Lower leg skin (tissue), 4 donors: ENCODE measurements at regions of chr4 and their contacts with region 1.

Region 1: GRCh38 chr4:1899149-1900086 is 28.2 kb downstream of the NSD2 start:
- DNase-seq: peak; percentile 59 to 91
- H3K4me3 ChIP-seq: no peak overlapping the region
- CTCF ChIP-seq: peak in 1 of 3 donors; percentile 41
- POLR2A ChIP-seq: no peak

Region 2: DNA sequence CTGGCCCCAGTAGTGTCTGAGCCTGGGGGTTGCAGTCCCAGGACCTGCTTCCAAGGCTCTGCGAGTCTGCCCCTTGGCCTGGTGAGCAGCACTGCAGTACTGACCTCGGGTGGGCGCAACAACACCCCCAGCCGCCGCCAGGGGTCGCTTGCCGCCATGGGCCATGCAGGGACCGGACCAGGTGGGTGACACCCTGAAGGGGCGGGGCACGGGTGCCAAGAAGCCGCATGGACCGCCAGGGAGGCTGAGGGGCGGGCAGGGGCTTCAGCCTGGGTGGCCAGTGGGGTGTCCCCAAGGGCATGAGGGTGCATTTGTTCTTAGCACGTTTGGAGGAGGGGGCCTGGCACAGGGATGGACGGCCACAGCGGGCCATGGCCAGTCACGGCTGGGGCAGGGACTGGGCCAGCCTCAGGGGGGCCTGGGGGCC is 153.1 kb before region 1 on chr4:
- intact Hi-C with region 1: loop called (anchors 5 kb)
- DNase-seq: peak in 1 of 2 donors; percentile 93
- H3K4me3 ChIP-seq: no peak overlapping the region
- CTCF ChIP-seq: peak in 1 of 3 donors; percentile 12
- POLR2A ChIP-seq: no peak

Region 3: GRCh38 chr4:1809754-1810511 is 89.5 kb before region 1 on chr4:
- intact Hi-C with region 1: loop called (anchors 10 kb)
- DNase-seq: peak in 1 of 2 donors; percentile 93
- H3K4me3 ChIP-seq: no peak overlapping the region
- CTCF ChIP-seq: peak in 1 of 3 donors; percentile 33
- POLR2A ChIP-seq: no peak

Region 4: DNA sequence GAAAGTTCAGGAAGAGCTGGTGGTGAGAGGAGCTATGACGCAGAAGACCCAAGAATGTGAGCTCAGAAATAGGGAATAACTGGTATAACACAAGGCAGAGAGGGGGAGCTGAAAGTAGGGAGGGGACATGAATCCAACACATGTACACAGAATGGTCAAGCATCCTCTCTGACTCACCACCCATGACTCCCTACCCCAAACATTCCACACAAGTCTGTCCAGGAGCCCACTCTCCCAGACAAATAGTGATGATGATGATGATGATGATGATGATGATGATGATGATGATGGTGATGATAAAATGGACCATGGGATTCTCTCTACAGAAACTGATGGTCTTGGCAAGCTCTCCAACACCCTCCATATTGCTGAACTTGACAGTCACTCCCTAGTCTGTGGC is 206.1 kb after region 1 on chr4:
- intact Hi-C with region 1: no loop called
- DNase-seq: no peak
- H3K4me3 ChIP-seq: no peak overlapping the region
- CTCF ChIP-seq: no peak
- POLR2A ChIP-seq: no peak

Region 5: GRCh38 chr4:3013839-3014350 is 1114.5 kb after region 1 on chr4:
- intact Hi-C with region 1: no loop called
- DNase-seq: no peak
- H3K4me3 ChIP-seq: no peak overlapping the region
- CTCF ChIP-seq: no peak
- POLR2A ChIP-seq: no peak